H1 (cell line): ENCODE measurements at regions of chr6 and their contacts with region 1.

Region 1: GRCh38 chr6:31619805-31620585 is 520 bp upstream of the PRRC2A start:
- DNase-seq: peak; percentile 94 to 97
- H3K4me3 ChIP-seq: peak overlapping the region; percentile 72 to 97 (median 82)
- H3K27ac ChIP-seq: peak overlapping the region; percentile 99
- H3K4me1 ChIP-seq: peaks cover 2 to 12% (median 7%) of the 10 kb centered on the region in 4 experiments; a peak in 6 of 7 replicates
- H3K27me3 ChIP-seq: no peaks in the 10 kb centered on the region
- CTCF ChIP-seq: no peak
- EP300 ChIP-seq: no peak
- POLR2A ChIP-seq: peak; percentile 84 to 94
- RAD21 ChIP-seq: no peak

Region 2: GRCh38 chr6:31575335-31575901 is 44.6 kb before region 1 on chr6 and contains the start of gene TNF:
- CTCF ChIA-PET with region 1: no interaction called
- POLR2A ChIA-PET with region 1: interaction called, 10 read pairs
- DNase-seq: no peak
- H3K4me3 ChIP-seq: no peak within 1 kb of the TSS
- H3K27ac ChIP-seq: no peak within 1 kb of the TSS
- H3K4me1 ChIP-seq: peaks cover 0 to 3% (median 0%) of the 10 kb centered on the region in 4 experiments; a peak in 3 of 7 replicates
- H3K27me3 ChIP-seq: peaks cover 0 to 7% (median 6%) of the 10 kb centered on the region in 4 experiments; a peak in 5 of 7 replicates
- CTCF ChIP-seq: no peak
- EP300 ChIP-seq: no peak
- POLR2A ChIP-seq: no peak
- RAD21 ChIP-seq: no peak
- total RNA-seq, gene TNF: not detected in 2 replicates

Region 3: GRCh38 chr6:31639449-31639861 is 19.5 kb after region 1 on chr6:
- CTCF ChIA-PET with region 1: interaction called, 9 read pairs
- POLR2A ChIA-PET with region 1: interaction called, 648 read pairs
- DNase-seq: no peak
- H3K4me3 ChIP-seq: no peak overlapping the region
- H3K27ac ChIP-seq: no peak overlapping the region
- H3K4me1 ChIP-seq: no peaks in the 10 kb centered on the region
- H3K27me3 ChIP-seq: no peaks in the 10 kb centered on the region
- CTCF ChIP-seq: no peak
- EP300 ChIP-seq: no peak
- POLR2A ChIP-seq: no peak
- RAD21 ChIP-seq: no peak

Region 4: GRCh38 chr6:31665501-31666336 is 45.7 kb after region 1 on chr6 and contains the start of gene CSNK2B:
- CTCF ChIA-PET with region 1: interaction called, 6 read pairs
- POLR2A ChIA-PET with region 1: interaction called, 883 read pairs
- DNase-seq: peak; percentile 88 to 91
- H3K4me3 ChIP-seq: peak within 1 kb of the TSS; percentile 88 to 94 (median 91)
- H3K27ac ChIP-seq: peak within 1 kb of the TSS; percentile 97
- H3K4me1 ChIP-seq: peaks cover 0 to 12% (median 4%) of the 10 kb centered on the region in 4 experiments; a peak in 5 of 7 replicates
- H3K27me3 ChIP-seq: no peaks in the 10 kb centered on the region
- CTCF ChIP-seq: no peak
- EP300 ChIP-seq: no peak
- POLR2A ChIP-seq: peak in 1 of 2 experiments; percentile 95; a peak in 2 of 3 replicates
- RAD21 ChIP-seq: no peak
- total RNA-seq, gene CSNK2B: 192 and 208 TPM in 2 replicates

Region 5: GRCh38 chr6:31763619-31763940 is 143.6 kb after region 1 on chr6:
- CTCF ChIA-PET with region 1: no interaction called
- POLR2A ChIA-PET with region 1: no interaction called
- DNase-seq: no peak
- H3K4me3 ChIP-seq: no peak overlapping the region
- H3K27ac ChIP-seq: 0 out of 2 replicates have a peak overlapping the region, but pooled peaks have one; percentile 32
- H3K4me1 ChIP-seq: peaks cover 0 to 11% (median under 1%) of the 10 kb centered on the region in 4 experiments; a peak in 4 of 7 replicates
- H3K27me3 ChIP-seq: no peaks in the 10 kb centered on the region
- CTCF ChIP-seq: no peak
- EP300 ChIP-seq: peak in 1 of 2 experiments; percentile 94; a peak in 2 of 3 replicates
- POLR2A ChIP-seq: no peak
- RAD21 ChIP-seq: peak in 1 of 2 experiments; percentile 9; a peak in 1 of 4 replicates